ENCODE measurements at regions of chr7 and their contacts with region 1.

Region 1: DNA sequence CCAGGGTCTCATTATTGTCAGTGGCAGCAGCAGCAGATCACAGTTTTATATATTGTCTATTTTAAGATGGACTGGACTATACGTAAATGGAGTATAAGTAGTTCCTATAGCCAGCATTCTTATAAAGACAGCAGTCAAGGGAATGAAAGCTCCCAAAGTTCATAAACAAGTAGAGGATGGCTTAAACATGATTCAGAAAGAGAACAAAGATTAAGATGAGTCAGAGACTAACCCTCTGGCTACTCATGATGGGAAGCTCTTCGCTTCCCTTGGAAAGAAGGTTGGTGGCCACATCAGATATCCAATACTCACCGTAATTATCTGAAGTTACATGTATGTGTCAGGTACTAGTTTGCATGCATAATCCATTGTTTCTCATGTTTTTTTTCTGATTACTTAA is 277.0 kb downstream of the INHBA start:
- DNase-seq: peak; percentile 53
- H3K4me3 ChIP-seq: no peak overlapping the region
- H3K27ac ChIP-seq: peak overlapping the region; percentile 71
- H3K4me1 ChIP-seq: peaks cover 18% of the 10 kb centered on the region
- H3K27me3 ChIP-seq: no peaks in the 10 kb centered on the region
- CTCF ChIP-seq: no peak

Region 2: GRCh38 chr7:41696314-41696916 is 270.5 kb after region 1 on chr7:
- dilution Hi-C with region 1: loop called (anchors 25 kb)
- DNase-seq: no peak
- H3K4me3 ChIP-seq: peak overlapping the region; percentile 51 to 86 (median 86)
- H3K27ac ChIP-seq: peak overlapping the region; percentile 65
- H3K4me1 ChIP-seq: peaks cover 31% of the 10 kb centered on the region
- H3K27me3 ChIP-seq: no peaks in the 10 kb centered on the region
- CTCF ChIP-seq: peak; percentile 74 to 90 (median 77)